ENCODE measurements at regions of chr9 and their contacts with region 1.

Region 1: GRCh38 chr9:110256380-110257096 is at the start of gene TXN:
- DNase-seq: peak; percentile 89

Region 2: GRCh38 chr9:110276781-110277180 is 20.2 kb after region 1 on chr9:
- CTCF ChIA-PET with region 1: no interaction called
- POLR2A ChIA-PET with region 1: interaction called, 11 read pairs
- DNase-seq: no peak

Region 3: GRCh38 chr9:110538225-110539041 is 281.9 kb after region 1 on chr9:
- CTCF ChIA-PET with region 1: no interaction called
- POLR2A ChIA-PET with region 1: no interaction called
- DNase-seq: no peak

Measured in HEK293T (cell line).